B cell (primary cell): ENCODE measurements at regions of chr6 and their contacts with region 1.

Region 1: GRCh38 chr6:22320750-22321149 is 23.9 kb upstream of the PRL start:
- DNase-seq: no peak
- ATAC-seq: no peak
- H3K4me3 ChIP-seq: no peak overlapping the region
- H3K4me3 Mint-ChIP-seq: no peak overlapping the region
- H3K27ac ChIP-seq: no peak overlapping the region
- H3K27ac Mint-ChIP-seq: no peak overlapping the region
- H3K4me1 ChIP-seq: no peaks in the 10 kb centered on the region
- H3K4me1 Mint-ChIP-seq: no peaks in the 10 kb centered on the region
- H3K27me3 ChIP-seq: no peaks in the 10 kb centered on the region
- H3K27me3 Mint-ChIP-seq: no peaks in the 10 kb centered on the region
- CTCF ChIP-seq: no peak

Region 2: GRCh38 chr6:22350109-22350508 is 29.4 kb after region 1 on chr6:
- CTCF ChIA-PET with region 1: no interaction called
- POLR2A ChIA-PET with region 1: no interaction called
- intact Hi-C with region 1: loop called (anchors 1 kb)
- DNase-seq: no peak
- ATAC-seq: no peak
- H3K4me3 ChIP-seq: no peak overlapping the region
- H3K4me3 Mint-ChIP-seq: no peak overlapping the region
- H3K27ac ChIP-seq: no peak overlapping the region
- H3K27ac Mint-ChIP-seq: no peak overlapping the region
- H3K4me1 ChIP-seq: no peaks in the 10 kb centered on the region
- H3K4me1 Mint-ChIP-seq: no peaks in the 10 kb centered on the region
- H3K27me3 ChIP-seq: no peaks in the 10 kb centered on the region
- H3K27me3 Mint-ChIP-seq: no peaks in the 10 kb centered on the region
- CTCF ChIP-seq: no peak

Region 3: DNA sequence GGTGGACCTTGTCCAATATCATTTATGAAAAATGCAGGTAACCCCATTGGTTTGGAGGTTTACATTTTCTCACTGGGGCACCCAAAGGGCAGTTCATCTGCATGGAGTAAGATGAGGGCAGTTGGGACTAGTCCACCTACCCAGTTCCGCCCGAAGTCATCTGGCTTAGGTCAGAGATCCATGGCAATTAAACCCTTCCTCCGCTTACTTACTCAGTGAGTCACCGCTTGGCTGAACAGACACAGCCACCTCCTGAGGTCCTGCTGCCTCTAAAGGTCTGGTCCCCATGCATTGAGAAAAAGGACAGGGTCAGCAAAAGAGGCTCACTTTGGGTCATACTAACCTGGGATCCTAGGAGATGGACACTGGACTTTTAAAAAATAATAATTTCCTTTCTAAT is 79.0 kb after region 1 on chr6:
- CTCF ChIA-PET with region 1: no interaction called
- POLR2A ChIA-PET with region 1: no interaction called
- intact Hi-C with region 1: no loop called
- DNase-seq: no peak
- ATAC-seq: no peak
- H3K4me3 ChIP-seq: no peak overlapping the region
- H3K4me3 Mint-ChIP-seq: no peak overlapping the region
- H3K27ac ChIP-seq: no peak overlapping the region
- H3K27ac Mint-ChIP-seq: no peak overlapping the region
- H3K4me1 ChIP-seq: no peaks in the 10 kb centered on the region
- H3K4me1 Mint-ChIP-seq: no peaks in the 10 kb centered on the region
- H3K27me3 ChIP-seq: no peaks in the 10 kb centered on the region
- H3K27me3 Mint-ChIP-seq: no peaks in the 10 kb centered on the region
- CTCF ChIP-seq: no peak